Natural killer cell (primary cell): ENCODE measurements at regions of chr2 and their contacts with region 1.

Region 1: DNA sequence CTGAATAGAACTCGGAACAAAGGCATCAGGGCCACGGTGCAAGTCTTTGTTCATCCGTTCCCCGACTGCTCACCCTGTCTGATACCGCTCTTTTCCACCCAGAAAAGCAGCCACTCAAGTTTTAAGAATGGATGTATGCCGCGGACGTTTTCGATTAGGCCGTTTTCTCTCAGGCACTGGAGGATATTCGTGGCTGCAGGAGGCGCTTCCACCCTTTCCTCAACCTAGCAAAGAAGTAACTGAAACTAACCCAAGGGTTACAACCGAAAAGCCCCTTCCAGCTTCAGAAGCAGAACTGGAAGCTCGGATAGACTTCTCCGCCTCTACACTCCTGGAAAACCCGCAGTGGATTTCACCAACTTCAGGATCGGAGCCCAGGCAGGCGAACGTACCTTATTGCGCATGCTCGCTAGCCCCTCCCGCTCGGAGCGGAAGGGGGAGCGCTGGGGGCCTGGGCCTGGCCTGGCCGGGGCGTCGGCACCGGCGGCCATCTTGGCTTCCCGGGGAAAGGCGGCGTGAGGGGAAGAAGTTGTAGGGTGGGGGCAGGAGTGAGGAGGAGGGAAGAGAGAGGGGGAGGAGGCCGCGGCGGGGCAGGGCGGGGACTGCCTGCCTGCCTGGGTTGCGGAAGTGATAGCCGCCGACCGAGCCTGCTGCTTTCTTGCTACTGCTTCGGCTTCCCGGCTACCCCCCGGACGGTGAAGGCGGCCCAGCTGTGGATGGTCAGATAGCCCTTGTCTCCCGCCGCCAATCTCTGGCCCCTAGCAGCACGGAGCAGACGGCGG is at the start of gene ACTR3:
- DNase-seq: peak; percentile 97 to 99
- ATAC-seq: peak; percentile 73 to 90 (median 85)
- H3K4me3 ChIP-seq: peak within 1 kb of the TSS; percentile 91
- H3K4me3 Mint-ChIP-seq: peak within 1 kb of the TSS; percentile 100
- H3K27ac ChIP-seq: peak within 1 kb of the TSS; percentile 94
- H3K27ac Mint-ChIP-seq: peak within 1 kb of the TSS; percentile 97 to 99
- H3K4me1 ChIP-seq: peaks cover 50% of the 10 kb centered on the region
- H3K4me1 Mint-ChIP-seq: peaks cover 79 to 85% of the 10 kb centered on the region in 2 donors
- H3K27me3 ChIP-seq: no peaks in the 10 kb centered on the region
- H3K27me3 Mint-ChIP-seq: no peaks in the 10 kb centered on the region
- CTCF ChIP-seq: no peak
- total RNA-seq, gene ACTR3: 323 to 428 (median 352) TPM

Region 2: DNA sequence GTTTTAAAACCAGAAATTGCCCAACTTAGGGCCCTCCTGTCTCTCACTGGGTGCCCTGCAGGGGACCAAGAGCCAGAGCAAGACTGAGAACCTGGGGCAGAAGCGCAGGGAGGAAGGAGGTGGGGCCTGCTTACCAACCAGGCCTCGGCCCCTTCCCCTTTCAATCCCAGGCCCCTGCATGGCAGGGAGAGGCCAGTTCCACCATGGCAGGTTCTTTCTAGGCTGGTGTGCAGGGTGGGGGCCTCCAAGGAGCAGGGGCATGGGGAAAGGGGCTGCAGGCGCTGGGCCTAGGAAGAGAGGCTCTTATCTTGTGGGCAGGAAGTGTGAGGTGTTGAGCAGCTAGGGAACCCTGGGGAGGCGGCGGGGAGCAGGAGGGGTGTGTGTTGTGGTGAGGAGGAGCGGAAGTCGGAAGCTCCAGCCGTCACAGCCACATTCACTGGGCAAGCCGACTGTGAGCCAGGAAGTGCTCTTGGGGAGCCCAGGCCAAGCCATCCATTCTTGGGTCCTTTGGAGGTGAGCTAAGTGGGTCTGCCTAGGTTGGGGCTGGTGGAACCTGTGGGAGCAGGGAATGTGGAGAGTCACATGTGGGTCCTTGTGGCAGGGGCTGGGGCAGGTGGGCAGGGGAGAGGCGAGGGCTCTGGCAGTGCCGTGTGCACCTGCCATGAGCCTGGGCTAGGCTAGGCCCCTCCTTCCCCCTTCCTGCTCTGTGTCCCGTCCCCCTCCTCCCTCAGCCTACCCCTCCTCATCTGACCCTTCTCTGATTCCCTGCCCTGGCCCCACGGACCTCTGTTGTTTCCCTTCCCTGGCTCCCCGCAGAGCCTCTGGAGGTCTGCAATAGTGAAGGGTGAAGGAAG is 715.9 kb before region 1 on chr2 and contains the start of gene PSD4:
- intact Hi-C with region 1: loop called (anchors 10 kb)
- DNase-seq: peak; percentile 68 to 94
- ATAC-seq: peak; percentile 56 to 86 (median 75)
- H3K4me3 ChIP-seq: peak within 1 kb of the TSS; percentile 65
- H3K4me3 Mint-ChIP-seq: peak within 1 kb of the TSS; percentile 85
- H3K27ac ChIP-seq: peak within 1 kb of the TSS; percentile 81
- H3K27ac Mint-ChIP-seq: peak within 1 kb of the TSS; percentile 85 to 91
- H3K4me1 ChIP-seq: peaks cover 88% of the 10 kb centered on the region
- H3K4me1 Mint-ChIP-seq: peaks cover 71 to 79% of the 10 kb centered on the region in 2 donors
- H3K27me3 ChIP-seq: no peaks in the 10 kb centered on the region
- H3K27me3 Mint-ChIP-seq: no peaks in the 10 kb centered on the region
- CTCF ChIP-seq: no peak
- total RNA-seq, gene PSD4: 280 to 347 (median 340) TPM

Region 3: DNA sequence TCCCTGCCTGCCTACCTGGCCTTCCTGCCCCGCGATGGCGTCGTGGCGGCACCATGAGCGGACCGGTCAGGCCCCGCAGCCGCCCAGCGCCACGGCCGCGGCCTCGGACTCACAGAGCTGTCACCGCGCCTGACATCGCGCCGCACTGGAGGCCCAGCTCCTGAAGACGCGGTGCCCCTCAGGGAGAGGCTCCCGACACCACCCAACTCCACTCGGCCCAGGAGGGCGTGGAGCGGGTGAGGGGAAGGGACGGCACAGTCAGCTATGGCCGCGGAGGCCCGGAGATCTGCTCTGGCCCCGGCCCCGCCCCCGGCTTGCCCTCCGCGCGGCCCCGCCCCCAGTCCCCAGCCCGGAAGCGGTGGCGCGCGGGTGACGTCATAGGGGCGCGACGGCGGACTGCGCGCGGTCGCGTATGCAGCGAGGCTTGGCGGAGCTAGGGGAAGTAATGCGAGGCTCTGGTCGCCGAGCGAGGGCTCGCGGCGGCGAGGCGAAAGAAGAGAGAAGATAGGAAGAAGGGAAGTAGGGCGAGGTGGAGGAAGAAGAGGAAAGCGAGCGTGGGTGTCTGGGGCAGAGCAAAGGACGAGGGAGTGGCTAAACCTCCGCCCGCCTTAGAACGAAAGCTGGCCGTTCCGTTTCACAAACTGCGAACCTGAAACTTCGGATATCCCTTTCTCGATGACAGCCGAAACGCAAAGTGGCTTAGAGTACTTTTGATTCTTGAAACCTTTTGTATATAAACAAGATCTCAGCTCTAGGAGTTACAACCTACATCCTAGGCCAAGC is 133.1 kb before region 1 on chr2 and contains the start of gene SLC35F5:
- intact Hi-C with region 1: loop called (anchors 2 kb)
- DNase-seq: peak; percentile 95 to 98
- ATAC-seq: peak; percentile 90 to 97 (median 92)
- H3K4me3 ChIP-seq: peak within 1 kb of the TSS; percentile 48
- H3K4me3 Mint-ChIP-seq: peak within 1 kb of the TSS; percentile 88
- H3K27ac ChIP-seq: peak within 1 kb of the TSS; percentile 85
- H3K27ac Mint-ChIP-seq: peak within 1 kb of the TSS; percentile 84 to 95
- H3K4me1 ChIP-seq: peaks cover 7% of the 10 kb centered on the region
- H3K4me1 Mint-ChIP-seq: peaks cover 14 to 25% of the 10 kb centered on the region in 2 donors
- H3K27me3 ChIP-seq: no peaks in the 10 kb centered on the region
- H3K27me3 Mint-ChIP-seq: peaks cover 0 to 2% of the 10 kb centered on the region in 2 donors
- CTCF ChIP-seq: no peak
- total RNA-seq, gene SLC35F5: 42.0 to 48.9 (median 42.3) TPM

Region 4: GRCh38 chr2:113910110-113910717 is 20.6 kb after region 1 on chr2:
- intact Hi-C with region 1: loop called (anchors 2 kb)
- DNase-seq: peak in 1 of 2 donors; percentile 49
- ATAC-seq: peak; percentile 41 to 69 (median 61)
- H3K4me3 ChIP-seq: no peak overlapping the region
- H3K4me3 Mint-ChIP-seq: peak overlapping the region; percentile 21
- H3K27ac ChIP-seq: no peak overlapping the region
- H3K27ac Mint-ChIP-seq: peak overlapping the region; percentile 59 to 78
- H3K4me1 ChIP-seq: peaks cover 21% of the 10 kb centered on the region
- H3K4me1 Mint-ChIP-seq: peaks cover 57 to 68% of the 10 kb centered on the region in 2 donors
- H3K27me3 ChIP-seq: no peaks in the 10 kb centered on the region
- H3K27me3 Mint-ChIP-seq: no peaks in the 10 kb centered on the region
- CTCF ChIP-seq: no peak

Region 5: GRCh38 chr2:113922784-113923183 is 33.1 kb after region 1 on chr2:
- intact Hi-C with region 1: loop called (anchors 5 kb)
- DNase-seq: no peak
- ATAC-seq: no peak
- H3K4me3 ChIP-seq: no peak overlapping the region
- H3K4me3 Mint-ChIP-seq: no peak overlapping the region
- H3K27ac ChIP-seq: no peak overlapping the region
- H3K27ac Mint-ChIP-seq: no peak overlapping the region
- H3K4me1 ChIP-seq: peaks cover 15% of the 10 kb centered on the region
- H3K4me1 Mint-ChIP-seq: peaks cover 18 to 21% of the 10 kb centered on the region in 2 donors
- H3K27me3 ChIP-seq: no peaks in the 10 kb centered on the region
- H3K27me3 Mint-ChIP-seq: no peaks in the 10 kb centered on the region
- CTCF ChIP-seq: no peak

Region 6: DNA sequence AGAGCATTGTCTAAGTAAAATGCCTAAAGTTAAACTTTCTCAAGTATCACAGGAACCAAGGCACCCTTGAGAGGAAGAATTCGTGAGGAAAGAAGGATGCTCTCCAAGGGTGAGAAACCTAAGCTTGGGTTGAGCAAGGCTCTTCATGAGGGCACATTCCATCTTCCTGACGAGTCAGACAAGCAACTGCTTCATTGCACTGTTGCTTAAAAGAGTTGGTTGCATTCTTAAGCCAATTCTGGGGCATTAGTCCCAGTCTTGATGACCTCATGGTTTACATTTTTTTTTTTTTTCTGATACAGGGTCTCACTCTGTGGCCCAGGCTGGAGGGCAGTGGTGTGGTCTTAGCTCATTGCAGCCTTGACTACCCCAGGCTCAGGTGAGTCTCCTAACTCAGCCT is 237.7 kb after region 1 on chr2:
- intact Hi-C with region 1: no loop called
- DNase-seq: no peak
- ATAC-seq: no peak
- H3K4me3 ChIP-seq: no peak overlapping the region
- H3K4me3 Mint-ChIP-seq: no peak overlapping the region
- H3K27ac ChIP-seq: no peak overlapping the region
- H3K27ac Mint-ChIP-seq: no peak overlapping the region
- H3K4me1 ChIP-seq: no peaks in the 10 kb centered on the region
- H3K4me1 Mint-ChIP-seq: no peaks in the 10 kb centered on the region
- H3K27me3 ChIP-seq: no peaks in the 10 kb centered on the region
- H3K27me3 Mint-ChIP-seq: peaks cover 13 to 16% of the 10 kb centered on the region in 2 donors
- CTCF ChIP-seq: no peak

Region 7: GRCh38 chr2:114156366-114157056 is 266.8 kb after region 1 on chr2:
- intact Hi-C with region 1: no loop called
- DNase-seq: no peak
- ATAC-seq: no peak
- H3K4me3 ChIP-seq: no peak overlapping the region
- H3K4me3 Mint-ChIP-seq: no peak overlapping the region
- H3K27ac ChIP-seq: no peak overlapping the region
- H3K27ac Mint-ChIP-seq: no peak overlapping the region
- H3K4me1 ChIP-seq: no peaks in the 10 kb centered on the region
- H3K4me1 Mint-ChIP-seq: no peaks in the 10 kb centered on the region
- H3K27me3 ChIP-seq: no peaks in the 10 kb centered on the region
- H3K27me3 Mint-ChIP-seq: peaks cover 0 to 6% of the 10 kb centered on the region in 2 donors
- CTCF ChIP-seq: no peak